Caco-2 (cell line): ENCODE measurements at regions of chr7 and their contacts with region 1.

Region 1: GRCh38 chr7:151876899-151877777 is at the start of gene PRKAG2:
- DNase-seq: peak; percentile 62 to 63
- H3K4me3 ChIP-seq: peak within 1 kb of the TSS; percentile 83
- H3K4me3 Mint-ChIP-seq: peak within 1 kb of the TSS; percentile 94
- H3K27ac Mint-ChIP-seq: no peak within 1 kb of the TSS
- H3K4me1 ChIP-seq: 0 out of 2 replicates have a peak, but pooled peaks cover 7% of the 10 kb centered on the region
- H3K4me1 Mint-ChIP-seq: no peaks in the 10 kb centered on the region
- H3K27me3 ChIP-seq: peaks cover 1% of the 10 kb centered on the region; the same call in 1 of the 2 replicates
- H3K27me3 Mint-ChIP-seq: no peaks in the 10 kb centered on the region
- CTCF ChIP-seq: no peak
- total RNA-seq, gene PRKAG2: 14.7 and 15.9 TPM in 2 replicates

Region 2: GRCh38 chr7:151863386-151864079 is 13.6 kb before region 1 on chr7:
- CTCF ChIA-PET with region 1: interaction called, 14 read pairs
- POLR2A ChIA-PET with region 1: no interaction called
- intact Hi-C with region 1: no loop called
- DNase-seq: peak; percentile 65 to 67
- H3K4me3 ChIP-seq: no peak overlapping the region
- H3K4me3 Mint-ChIP-seq: no peak overlapping the region
- H3K27ac Mint-ChIP-seq: no peak overlapping the region
- H3K4me1 ChIP-seq: no peaks in the 10 kb centered on the region
- H3K4me1 Mint-ChIP-seq: no peaks in the 10 kb centered on the region
- H3K27me3 ChIP-seq: no peaks in the 10 kb centered on the region
- H3K27me3 Mint-ChIP-seq: no peaks in the 10 kb centered on the region
- CTCF ChIP-seq: peak; percentile 58 to 79